ENCODE measurements at regions of chr10 and their contacts with region 1.

Region 1: GRCh38 chr10:95693668-95694534 is at the start of gene TCTN3:
- DNase-seq: peak; percentile 98
- ATAC-seq: peak; percentile 99
- H3K4me3 Mint-ChIP-seq: peak within 1 kb of the TSS; percentile 99
- H3K27ac Mint-ChIP-seq: peak within 1 kb of the TSS; percentile 85
- H3K4me1 Mint-ChIP-seq: peaks cover 44% of the 10 kb centered on the region
- H3K27me3 Mint-ChIP-seq: no peaks in the 10 kb centered on the region
- total RNA-seq, gene TCTN3: 29.7 to 69.2 TPM

Region 2: GRCh38 chr10:95706986-95707385 is 13.1 kb after region 1 on chr10:
- CTCF ChIA-PET with region 1: interaction called, 36 read pairs
- DNase-seq: no peak
- ATAC-seq: no peak
- H3K4me3 Mint-ChIP-seq: no peak overlapping the region
- H3K27ac Mint-ChIP-seq: no peak overlapping the region
- H3K4me1 Mint-ChIP-seq: peaks cover 8% of the 10 kb centered on the region
- H3K27me3 Mint-ChIP-seq: no peaks in the 10 kb centered on the region

Region 3: DNA sequence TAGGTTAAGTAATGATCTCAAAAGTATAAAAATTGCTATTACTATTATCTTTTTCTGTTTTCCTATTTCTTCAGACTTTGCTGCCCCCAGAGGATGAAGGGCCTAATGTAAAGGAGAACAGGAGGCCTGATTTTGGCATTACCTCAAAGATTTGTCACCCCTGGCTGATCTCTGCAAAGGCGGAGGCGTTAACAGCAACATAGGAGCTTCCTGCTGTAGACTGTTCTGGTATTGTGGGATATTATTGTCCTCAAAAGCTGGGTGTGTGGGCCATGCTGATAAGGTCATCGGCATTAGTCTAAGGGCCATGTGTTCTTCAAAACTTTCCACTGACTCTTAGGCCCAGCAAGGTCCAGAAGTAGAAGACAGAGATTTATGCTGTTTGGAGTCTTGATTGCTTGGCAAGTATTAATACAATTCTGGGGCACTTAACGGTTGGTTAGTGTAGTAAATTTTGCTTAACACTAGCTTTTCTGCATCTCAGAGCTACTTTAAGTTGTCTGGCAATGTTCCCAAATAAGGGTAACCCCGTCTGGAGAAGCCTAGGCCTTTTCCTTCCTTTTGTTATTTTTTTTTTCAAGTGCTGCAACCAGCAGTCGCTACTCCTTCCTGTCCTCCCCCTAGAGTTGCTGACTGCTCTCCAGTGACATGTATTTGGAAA is 48.0 kb after region 1 on chr10:
- CTCF ChIA-PET with region 1: interaction called, 14 read pairs
- DNase-seq: no peak
- ATAC-seq: no peak
- H3K4me3 Mint-ChIP-seq: no peak overlapping the region
- H3K27ac Mint-ChIP-seq: no peak overlapping the region
- H3K4me1 Mint-ChIP-seq: peaks cover 38% of the 10 kb centered on the region
- H3K27me3 Mint-ChIP-seq: peaks cover 20% of the 10 kb centered on the region

Region 4: DNA sequence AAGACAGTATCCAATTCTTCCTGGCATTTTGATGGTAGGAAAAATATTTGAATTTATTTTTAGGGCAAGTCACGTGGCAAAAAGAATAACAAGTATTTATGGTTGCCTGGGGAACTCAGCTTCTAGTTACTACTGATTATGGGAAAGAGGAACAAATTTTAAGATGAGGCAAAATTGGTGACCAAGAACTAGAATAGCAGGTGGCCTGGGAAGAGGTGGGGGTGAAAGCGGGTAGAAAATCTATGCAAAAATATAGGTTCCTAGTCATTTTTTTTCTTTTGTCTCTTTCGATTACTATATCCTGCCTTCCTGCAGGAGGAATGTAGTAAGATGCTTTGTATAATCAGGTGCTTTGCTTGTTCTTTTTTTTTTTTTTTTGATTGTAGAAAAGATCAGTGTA is 89.8 kb after region 1 on chr10:
- CTCF ChIA-PET with region 1: interaction called, 68 read pairs
- DNase-seq: no peak
- ATAC-seq: no peak
- H3K4me3 Mint-ChIP-seq: no peak overlapping the region
- H3K27ac Mint-ChIP-seq: peak overlapping the region; percentile 88
- H3K4me1 Mint-ChIP-seq: peaks cover 89% of the 10 kb centered on the region
- H3K27me3 Mint-ChIP-seq: no peaks in the 10 kb centered on the region

Region 5: GRCh38 chr10:95814011-95814727 is 120.3 kb after region 1 on chr10:
- CTCF ChIA-PET with region 1: interaction called, 28 read pairs
- DNase-seq: no peak
- ATAC-seq: no peak
- H3K4me3 Mint-ChIP-seq: no peak overlapping the region
- H3K27ac Mint-ChIP-seq: no peak overlapping the region
- H3K4me1 Mint-ChIP-seq: peaks cover 50% of the 10 kb centered on the region
- H3K27me3 Mint-ChIP-seq: peaks cover 3% of the 10 kb centered on the region

Region 6: DNA sequence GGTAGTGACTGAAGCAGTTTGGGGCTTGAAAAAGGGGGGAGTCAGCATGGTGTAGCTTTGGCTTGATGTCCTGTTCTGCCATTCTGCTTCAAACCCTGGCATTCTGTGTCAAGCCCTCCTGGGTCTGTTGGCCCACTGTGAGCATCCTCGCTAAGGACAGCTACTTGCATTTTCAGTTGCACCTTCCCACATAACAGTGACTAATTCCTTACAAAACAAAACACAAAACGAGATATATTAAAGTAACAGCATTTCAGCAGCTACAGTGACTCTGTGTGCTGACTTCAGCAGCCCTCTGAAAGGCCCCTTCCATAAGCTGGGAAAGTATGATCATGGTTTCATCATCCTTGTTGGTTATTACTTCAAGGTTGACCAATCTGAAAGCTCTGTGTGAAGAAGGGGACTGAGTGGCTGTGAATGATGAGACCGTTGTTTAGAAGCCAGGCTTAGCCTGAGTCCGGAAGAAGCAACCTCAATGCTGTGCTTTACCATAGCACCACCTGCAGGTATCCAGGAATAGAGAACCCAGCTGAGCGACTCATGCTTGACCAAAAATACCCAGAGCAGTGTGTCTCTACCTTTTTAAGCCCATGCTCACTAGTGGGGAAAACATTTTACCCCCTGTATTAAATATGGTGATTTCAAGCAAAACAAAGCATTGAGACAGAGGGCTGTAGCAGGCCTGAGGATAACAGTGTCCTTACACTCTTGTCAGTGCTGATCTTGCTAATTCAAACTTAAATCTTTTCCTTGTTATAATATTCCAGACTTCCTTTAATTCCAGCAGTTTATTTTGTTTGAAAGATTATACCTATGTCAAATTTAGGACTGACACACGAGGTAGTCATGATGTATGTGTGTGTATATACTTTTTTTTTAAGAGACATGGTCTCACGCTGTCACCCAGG is 171.3 kb after region 1 on chr10:
- CTCF ChIA-PET with region 1: interaction called, 143 read pairs
- DNase-seq: peak; percentile 73
- ATAC-seq: peak; percentile 91
- H3K4me3 Mint-ChIP-seq: no peak overlapping the region
- H3K27ac Mint-ChIP-seq: peak overlapping the region; percentile 79
- H3K4me1 Mint-ChIP-seq: peaks cover 57% of the 10 kb centered on the region
- H3K27me3 Mint-ChIP-seq: no peaks in the 10 kb centered on the region

Region 7: DNA sequence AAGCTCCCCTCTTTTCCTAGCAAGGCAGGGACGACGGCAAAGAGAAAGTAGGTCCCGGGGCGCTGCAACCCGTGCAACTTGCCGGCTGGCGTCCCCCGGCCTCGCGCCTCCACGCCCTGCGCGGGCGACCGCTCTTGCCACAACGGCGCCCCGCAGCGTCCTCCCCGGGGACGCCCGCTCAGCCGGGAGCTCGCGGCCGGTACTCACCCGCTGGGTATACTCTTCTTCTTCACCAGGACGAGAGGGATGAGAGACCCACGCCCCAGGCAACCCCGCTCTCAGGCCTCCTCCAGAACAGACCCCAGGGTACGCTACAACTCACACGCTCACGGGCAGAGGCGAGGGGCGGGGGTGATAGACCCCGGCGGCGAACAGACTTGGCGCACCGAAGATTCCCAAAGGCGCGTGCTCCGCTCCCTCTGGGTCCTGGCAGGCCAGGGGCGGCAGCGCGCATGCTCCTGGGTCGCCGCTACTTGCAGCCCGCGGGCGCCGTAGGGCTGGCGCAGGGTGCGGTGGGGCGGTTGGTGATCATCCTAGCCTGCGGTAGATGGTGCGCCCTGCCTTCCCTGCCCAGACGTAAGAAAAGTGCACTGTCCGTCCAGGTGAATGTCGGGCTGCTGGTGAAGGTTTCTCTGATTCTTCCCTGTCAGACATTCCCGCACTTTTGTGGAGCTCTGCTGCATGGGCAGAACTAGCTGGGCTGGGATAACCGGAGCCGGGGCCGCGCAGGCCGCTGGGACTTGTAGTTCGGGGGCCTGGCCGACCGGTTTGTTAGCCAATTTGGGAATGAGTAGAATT is 213.8 kb after region 1 on chr10 and contains the start of gene CC2D2B:
- CTCF ChIA-PET with region 1: interaction called, 18 read pairs
- DNase-seq: peak; percentile 79
- ATAC-seq: peak; percentile 91
- H3K4me3 Mint-ChIP-seq: peak within 1 kb of the TSS; percentile 86
- H3K27ac Mint-ChIP-seq: peak within 1 kb of the TSS; percentile 89
- H3K4me1 Mint-ChIP-seq: peaks cover 13% of the 10 kb centered on the region
- H3K27me3 Mint-ChIP-seq: peaks cover 10% of the 10 kb centered on the region
- total RNA-seq, gene CC2D2B: 3.0 to 4.2 TPM

Measured in activated CD8-positive, alpha-beta memory T cell treated with anti-CD3 and anti-CD28 coated beads, Interleukin-2, amount 10 ng/mL, durations not matched to agents 7 days and 5 days (primary cell).